ENCODE measurements at regions of chr17 and their contacts with region 1.

Region 1: GRCh38 chr17:12744298-12744697 is 45.0 kb upstream of the ARHGAP44 start:
- DNase-seq: no peak

Region 2: GRCh38 chr17:12140685-12141084 is 603.6 kb before region 1 on chr17:
- CTCF ChIA-PET with region 1: interaction called, 10 read pairs
- POLR2A ChIA-PET with region 1: no interaction called
- DNase-seq: no peak

Region 3: GRCh38 chr17:12789777-12790609 is 45.7 kb after region 1 on chr17:
- CTCF ChIA-PET with region 1: no interaction called
- POLR2A ChIA-PET with region 1: no interaction called
- DNase-seq: peak; percentile 19

Measured in HEK293T (cell line).